CD4-positive, alpha-beta T cell (primary cell): ENCODE measurements at regions of chr3 and their contacts with region 1.

Region 1: DNA sequence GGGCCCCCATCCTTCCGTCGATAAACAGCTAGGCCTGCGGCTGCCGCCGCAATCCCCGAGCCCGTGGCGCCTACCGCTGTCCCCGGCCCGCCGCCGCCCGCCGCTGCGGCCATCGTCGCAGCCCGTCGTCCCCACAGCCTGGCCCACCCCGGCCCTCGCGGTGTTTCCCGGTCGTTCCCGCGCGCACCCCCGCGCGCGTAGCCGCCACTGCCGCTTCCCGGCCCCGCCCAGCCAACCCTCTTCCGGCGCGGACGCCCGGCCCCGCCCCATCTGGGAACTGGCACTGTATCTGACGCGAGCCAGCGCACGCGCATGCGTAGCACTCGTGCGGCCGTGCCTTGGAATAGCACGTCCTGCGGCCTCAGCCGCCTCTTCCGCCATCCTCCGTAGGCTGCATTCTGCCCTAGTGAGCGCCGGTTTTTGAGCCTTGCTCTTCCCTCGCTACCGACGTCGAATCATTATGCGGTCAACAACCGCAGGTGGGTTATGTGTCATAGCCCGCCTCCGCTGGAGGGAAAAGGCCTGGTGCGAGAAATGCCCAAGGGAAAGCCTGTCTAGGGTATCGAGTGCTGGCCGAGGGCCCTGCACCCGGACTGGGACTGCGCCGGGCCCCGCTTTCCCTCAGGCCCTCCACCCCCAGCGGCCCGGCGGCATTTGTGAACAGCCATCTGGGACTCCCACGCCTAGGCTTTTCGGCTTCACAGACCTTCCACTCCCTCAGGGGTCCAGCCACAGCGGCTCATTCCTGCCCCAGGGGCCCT is at the start of gene SMARCC1:
- DNase-seq: peak; percentile 94 to 99 (median 97)
- ATAC-seq: peak; percentile 89
- H3K4me3 ChIP-seq: peak within 1 kb of the TSS; percentile 84
- H3K4me3 Mint-ChIP-seq: peak within 1 kb of the TSS; percentile 95
- H3K27ac ChIP-seq: peak within 1 kb of the TSS; percentile 96 to 97
- H3K27ac Mint-ChIP-seq: peak within 1 kb of the TSS; percentile 99
- H3K4me1 ChIP-seq: peaks cover 44% of the 10 kb centered on the region
- H3K4me1 Mint-ChIP-seq: peaks cover 31% of the 10 kb centered on the region
- H3K27me3 ChIP-seq: no peaks in the 10 kb centered on the region
- H3K27me3 Mint-ChIP-seq: no peaks in the 10 kb centered on the region
- CTCF ChIP-seq: no peak
- total RNA-seq, gene SMARCC1: 74.2 to 76.2 TPM

Region 2: GRCh38 chr3:46705022-46705530 is 1076.8 kb before region 1 on chr3:
- CTCF ChIA-PET with region 1: no interaction called
- POLR2A ChIA-PET with region 1: no interaction called
- intact Hi-C with region 1: loop called in 1 of 2 experiments (anchors 5 kb)
- DNase-seq: peak; percentile 47 to 83 (median 59)
- ATAC-seq: peak; percentile 88
- H3K4me3 ChIP-seq: no peak overlapping the region
- H3K4me3 Mint-ChIP-seq: no peak overlapping the region
- H3K27ac ChIP-seq: no peak overlapping the region
- H3K27ac Mint-ChIP-seq: no peak overlapping the region
- H3K4me1 ChIP-seq: peaks cover 30% of the 10 kb centered on the region
- H3K4me1 Mint-ChIP-seq: peaks cover 17% of the 10 kb centered on the region
- H3K27me3 ChIP-seq: peaks cover 0 to 9% of the 10 kb centered on the region in 2 experiments
- H3K27me3 Mint-ChIP-seq: no peaks in the 10 kb centered on the region
- CTCF ChIP-seq: peak; percentile 99

Region 3: GRCh38 chr3:47420511-47421484 is 361.1 kb before region 1 on chr3:
- CTCF ChIA-PET with region 1: no interaction called
- POLR2A ChIA-PET with region 1: no interaction called
- intact Hi-C with region 1: loop called in 1 of 2 experiments (anchors 2 kb)
- DNase-seq: peak; percentile 78 to 94 (median 86)
- ATAC-seq: peak; percentile 99
- H3K4me3 ChIP-seq: no peak overlapping the region
- H3K4me3 Mint-ChIP-seq: peak overlapping the region; percentile 57
- H3K27ac ChIP-seq: peak overlapping the region; percentile 62 to 82
- H3K27ac Mint-ChIP-seq: peak overlapping the region; percentile 94
- H3K4me1 ChIP-seq: peaks cover 17% of the 10 kb centered on the region
- H3K4me1 Mint-ChIP-seq: peaks cover 12% of the 10 kb centered on the region
- H3K27me3 ChIP-seq: no peaks in the 10 kb centered on the region
- H3K27me3 Mint-ChIP-seq: no peaks in the 10 kb centered on the region
- CTCF ChIP-seq: peak; percentile 84

Region 4: DNA sequence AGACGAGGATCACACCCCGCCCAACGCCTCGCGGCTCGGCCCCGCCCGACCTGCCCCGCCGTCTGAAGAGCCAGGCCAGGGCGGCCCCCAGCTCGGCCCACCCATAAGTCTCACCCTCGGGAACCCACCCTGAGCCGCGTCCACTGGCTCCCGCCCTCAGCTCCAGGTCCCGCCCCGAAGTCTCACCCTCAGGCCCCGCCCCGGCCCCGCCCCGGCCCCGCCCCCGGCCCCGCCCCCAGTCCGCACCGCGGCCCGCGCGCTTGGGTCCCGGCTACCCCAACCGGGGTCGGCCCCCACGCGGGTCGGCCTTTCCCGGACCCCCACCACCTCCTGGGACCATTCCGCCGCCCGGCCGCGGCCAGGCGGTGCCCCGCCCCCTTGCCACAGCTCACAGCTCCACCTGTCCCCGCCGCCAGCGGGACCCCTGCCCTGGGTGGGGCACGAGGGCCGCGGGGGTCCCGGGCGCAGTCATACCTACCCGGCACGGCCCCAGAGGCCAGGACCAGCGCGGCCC is 203.7 kb before region 1 on chr3:
- CTCF ChIA-PET with region 1: no interaction called
- POLR2A ChIA-PET with region 1: no interaction called
- intact Hi-C with region 1: loop called in 1 of 2 experiments (anchors 2 kb)
- DNase-seq: peak in 12 of 14 experiments; percentile 9 to 71 (median 34)
- ATAC-seq: peak; percentile 68
- H3K4me3 ChIP-seq: peak overlapping the region; percentile 37
- H3K4me3 Mint-ChIP-seq: peak overlapping the region; percentile 48
- H3K27ac ChIP-seq: no peak overlapping the region
- H3K27ac Mint-ChIP-seq: no peak overlapping the region
- H3K4me1 ChIP-seq: peaks cover 17% of the 10 kb centered on the region
- H3K4me1 Mint-ChIP-seq: peaks cover 10% of the 10 kb centered on the region
- H3K27me3 ChIP-seq: peaks cover 19 to 21% of the 10 kb centered on the region in 2 experiments
- H3K27me3 Mint-ChIP-seq: peaks cover 33% of the 10 kb centered on the region
- CTCF ChIP-seq: no peak

Region 5: DNA sequence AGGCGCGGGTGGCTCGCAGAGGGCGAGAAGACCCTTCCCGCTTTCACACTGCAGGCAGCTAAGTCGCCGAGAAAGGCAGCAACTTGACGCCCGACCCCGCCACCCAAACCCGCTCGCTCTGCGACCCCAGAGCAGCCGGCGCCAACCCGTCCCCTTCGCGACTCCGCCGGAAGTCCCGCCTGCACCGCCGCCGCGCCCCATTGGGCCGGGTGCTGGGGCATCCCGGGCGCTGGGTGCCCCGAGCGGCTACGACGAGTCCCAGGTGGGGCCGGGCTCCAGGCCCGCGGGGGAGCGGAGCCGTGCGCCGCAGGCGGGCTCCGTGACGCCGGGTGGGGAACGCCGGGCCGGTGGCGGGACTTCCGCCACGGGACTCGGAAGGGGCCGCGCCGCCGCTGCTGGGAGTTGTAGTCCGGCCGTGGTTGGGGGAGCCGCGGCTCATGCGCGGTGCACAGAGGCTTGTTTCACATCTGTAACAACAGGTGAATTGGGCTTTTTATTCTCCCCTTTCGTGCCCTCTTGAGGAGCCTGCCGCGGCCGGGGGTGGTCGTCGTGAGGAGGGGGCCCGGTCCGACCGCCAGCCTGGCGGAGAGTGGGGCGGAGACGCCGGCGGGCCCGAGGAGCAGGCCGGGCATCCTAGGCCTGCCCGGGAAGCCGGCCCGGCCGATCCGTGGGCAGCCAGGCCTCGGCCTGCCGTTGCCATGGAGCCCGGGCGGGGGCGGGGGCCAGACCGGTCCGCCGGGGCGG is 21.0 kb after region 1 on chr3 and contains the start of gene DHX30:
- CTCF ChIA-PET with region 1: no interaction called
- POLR2A ChIA-PET with region 1: interaction called, 15 read pairs
- intact Hi-C with region 1: loop called in 1 of 2 experiments (anchors 1 kb)
- DNase-seq: peak; percentile 63 to 94 (median 80)
- ATAC-seq: peak; percentile 90
- H3K4me3 ChIP-seq: peak within 1 kb of the TSS; percentile 98
- H3K4me3 Mint-ChIP-seq: peak within 1 kb of the TSS; percentile 97
- H3K27ac ChIP-seq: peak within 1 kb of the TSS; percentile 83 to 85
- H3K27ac Mint-ChIP-seq: peak within 1 kb of the TSS; percentile 96
- H3K4me1 ChIP-seq: peaks cover 26% of the 10 kb centered on the region
- H3K4me1 Mint-ChIP-seq: peaks cover 20% of the 10 kb centered on the region
- H3K27me3 ChIP-seq: no peaks in the 10 kb centered on the region
- H3K27me3 Mint-ChIP-seq: no peaks in the 10 kb centered on the region
- CTCF ChIP-seq: no peak
- total RNA-seq, gene DHX30: 75.1 to 75.6 TPM